Right cardiac atrium (tissue), 5 donors: ENCODE measurements at regions of chr7 and their contacts with region 1.

Region 1: DNA sequence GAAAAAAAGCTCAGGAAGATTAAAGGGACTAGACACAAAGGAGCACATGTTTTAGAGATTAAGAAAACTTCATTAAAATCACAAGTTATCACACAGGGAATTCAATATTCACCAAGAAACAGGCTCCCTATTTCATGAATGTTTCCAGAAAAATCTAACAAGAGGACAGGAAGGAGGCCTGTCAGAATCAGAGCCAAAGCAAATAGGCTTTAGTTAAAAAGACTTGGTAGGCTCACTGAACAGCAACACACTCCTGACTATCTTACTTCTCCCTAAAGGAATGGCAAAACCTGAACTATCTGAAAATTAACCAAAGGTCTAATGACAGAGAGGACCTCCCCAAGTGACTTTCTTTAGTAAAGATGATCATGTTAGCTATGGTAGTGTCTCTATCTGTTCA is 188.3 kb upstream of the MEOX2 start:
- DNase-seq: no peak
- ATAC-seq: peak; percentile 33 to 72
- H3K4me3 ChIP-seq: no peak overlapping the region
- H3K27ac ChIP-seq: no peak overlapping the region
- H3K4me1 ChIP-seq: no peaks in the 10 kb centered on the region
- H3K27me3 ChIP-seq: no peaks in the 10 kb centered on the region

Region 2: GRCh38 chr7:15954671-15955354 is 80.0 kb after region 1 on chr7:
- intact Hi-C with region 1: loop called in 1 of 4 experiments (anchors 2 kb)
- DNase-seq: no peak
- ATAC-seq: peak in 1 of 2 donors; percentile 74
- H3K4me3 ChIP-seq: no peak overlapping the region
- H3K27ac ChIP-seq: no peak overlapping the region
- H3K4me1 ChIP-seq: no peaks in the 10 kb centered on the region
- H3K27me3 ChIP-seq: no peaks in the 10 kb centered on the region

Region 3: DNA sequence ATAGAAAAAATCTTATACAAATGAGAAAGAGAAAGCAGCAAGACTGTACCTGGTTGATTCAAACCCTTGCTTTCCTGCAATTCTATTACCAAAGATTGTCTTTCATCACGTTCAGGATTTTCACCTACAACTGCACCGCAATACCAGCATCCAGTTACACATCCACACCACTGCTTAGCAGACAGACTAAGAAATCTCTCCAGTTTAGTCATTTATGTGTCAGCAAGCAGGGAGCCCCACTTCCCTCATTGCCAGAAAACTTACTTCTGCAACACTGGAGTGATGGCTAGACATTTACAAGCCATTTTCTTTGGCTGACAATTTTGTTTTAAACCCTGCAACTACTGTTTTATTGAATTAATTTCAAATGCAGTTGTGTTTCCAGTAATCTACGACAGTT is 171.3 kb after region 1 on chr7:
- intact Hi-C with region 1: no loop called
- DNase-seq: no peak
- ATAC-seq: no peak
- H3K4me3 ChIP-seq: no peak overlapping the region
- H3K27ac ChIP-seq: no peak overlapping the region
- H3K4me1 ChIP-seq: no peaks in the 10 kb centered on the region
- H3K27me3 ChIP-seq: no peaks in the 10 kb centered on the region

Region 4: GRCh38 chr7:16364916-16365576 is 490.3 kb after region 1 on chr7:
- intact Hi-C with region 1: no loop called
- DNase-seq: no peak
- ATAC-seq: no peak
- H3K4me3 ChIP-seq: no peak overlapping the region
- H3K27ac ChIP-seq: no peak overlapping the region
- H3K4me1 ChIP-seq: no peaks in the 10 kb centered on the region
- H3K27me3 ChIP-seq: no peaks in the 10 kb centered on the region